ENCODE measurements at regions of chr10 and their contacts with region 1.

Region 1: DNA sequence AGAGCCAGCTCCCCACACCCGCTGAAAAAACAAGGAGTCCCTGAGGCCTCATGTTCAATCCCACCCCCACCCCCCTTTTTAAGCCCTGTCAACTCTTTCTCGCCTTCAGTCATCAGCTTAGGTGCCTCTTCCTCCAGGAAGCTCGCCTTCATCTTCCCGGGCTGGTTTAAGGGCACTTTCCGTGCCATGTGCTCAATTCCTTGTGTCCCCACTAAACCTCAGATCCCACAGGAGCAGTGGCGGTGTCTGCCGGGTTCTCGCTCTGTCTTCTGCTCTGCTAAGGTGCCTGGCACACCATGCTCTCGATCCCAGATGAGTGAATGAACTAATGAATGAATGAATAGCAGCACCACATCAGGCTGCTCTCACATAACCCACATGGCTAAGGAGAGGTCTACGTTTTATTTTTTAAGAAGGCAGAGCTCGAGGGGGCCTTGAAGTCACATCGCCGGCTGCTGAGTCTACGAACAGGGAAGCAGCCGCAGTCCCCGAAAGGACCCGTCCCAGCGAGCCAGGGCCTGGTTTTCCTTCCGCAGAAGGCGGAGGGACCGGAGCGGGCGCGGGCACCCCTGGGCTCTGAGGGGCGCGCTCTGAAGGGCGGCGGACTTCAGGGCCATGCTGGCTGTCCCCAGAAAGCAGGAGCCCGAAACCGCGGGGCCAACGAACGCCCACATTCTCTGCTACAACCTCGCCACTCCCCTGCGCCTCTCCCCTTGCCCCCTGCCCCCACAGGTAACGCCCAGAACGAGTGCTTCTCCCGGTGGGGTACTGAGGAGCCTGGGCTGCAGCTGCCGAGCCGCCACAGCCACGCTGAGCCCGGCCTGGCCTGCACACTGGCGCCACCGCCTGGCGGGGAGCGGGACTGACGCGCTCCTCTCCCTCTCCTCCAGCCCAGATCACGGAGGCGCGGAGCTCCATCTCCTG is 73.4 kb upstream of the KCNMA1 start:
- DNase-seq: peak; percentile 90
- ATAC-seq: peak; percentile 85
- H3K4me3 Mint-ChIP-seq: peak overlapping the region; percentile 64
- H3K27ac Mint-ChIP-seq: no peak overlapping the region
- H3K4me1 Mint-ChIP-seq: peaks cover 35% of the 10 kb centered on the region
- H3K27me3 Mint-ChIP-seq: peaks cover 29% of the 10 kb centered on the region
- CTCF ChIP-seq: peak; percentile 96

Region 2: GRCh38 chr10:77391605-77392235 is 319.3 kb before region 1 on chr10:
- CTCF ChIA-PET with region 1: interaction called, 14 read pairs
- POLR2A ChIA-PET with region 1: no interaction called
- DNase-seq: peak; percentile 96
- ATAC-seq: peak; percentile 89
- H3K4me3 Mint-ChIP-seq: no peak overlapping the region
- H3K27ac Mint-ChIP-seq: no peak overlapping the region
- H3K4me1 Mint-ChIP-seq: peaks cover 45% of the 10 kb centered on the region
- H3K27me3 Mint-ChIP-seq: no peaks in the 10 kb centered on the region
- CTCF ChIP-seq: no peak; the same call in none of the 2 replicates

Region 3: DNA sequence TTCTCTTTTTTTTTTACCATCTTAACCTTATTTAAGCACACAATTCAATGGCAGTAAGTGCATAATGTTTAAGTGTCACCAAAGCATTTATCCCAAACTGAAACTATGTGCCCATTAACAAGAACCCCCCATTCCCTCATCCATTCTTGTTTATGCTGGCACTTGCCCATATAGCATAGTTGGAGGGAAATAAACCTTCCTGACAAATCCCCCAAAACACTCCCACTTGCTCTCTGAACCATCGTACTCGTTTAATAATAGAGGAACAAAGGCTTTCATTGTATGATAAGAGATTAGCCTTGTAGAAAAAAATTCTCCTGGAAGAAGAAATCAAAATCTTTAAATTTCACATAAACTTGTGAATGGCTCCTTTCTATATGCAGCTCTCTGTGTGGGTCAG is 47.0 kb before region 1 on chr10:
- CTCF ChIA-PET with region 1: interaction called, 16 read pairs
- POLR2A ChIA-PET with region 1: interaction called, 8 read pairs
- DNase-seq: no peak
- ATAC-seq: no peak
- H3K4me3 Mint-ChIP-seq: no peak overlapping the region
- H3K27ac Mint-ChIP-seq: no peak overlapping the region
- H3K4me1 Mint-ChIP-seq: peaks cover 19% of the 10 kb centered on the region
- H3K27me3 Mint-ChIP-seq: no peaks in the 10 kb centered on the region; the same call in 1 of the 2 replicates
- CTCF ChIP-seq: no peak

Region 4: DNA sequence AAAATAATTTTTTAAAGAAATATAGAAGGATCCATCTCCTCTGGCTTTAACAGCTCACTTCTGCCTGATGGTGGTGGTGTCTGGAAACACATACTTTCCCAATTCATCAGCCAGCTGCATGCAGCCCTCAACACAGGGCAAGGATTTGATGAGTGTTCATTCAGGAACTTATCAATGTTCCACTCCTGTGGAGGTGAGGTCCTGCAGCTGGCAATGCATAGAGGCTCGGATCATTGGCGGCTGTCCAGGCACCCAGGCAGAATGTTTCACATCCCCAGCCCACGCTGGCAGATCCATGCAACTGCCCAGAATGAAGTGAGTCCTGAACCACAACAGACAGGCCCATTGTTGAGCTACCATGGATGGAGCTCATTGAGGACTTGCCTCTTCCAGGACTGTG is 18.2 kb before region 1 on chr10:
- CTCF ChIA-PET with region 1: interaction called, 62 read pairs
- POLR2A ChIA-PET with region 1: interaction called, 3 read pairs
- DNase-seq: no peak
- ATAC-seq: no peak
- H3K4me3 Mint-ChIP-seq: no peak overlapping the region
- H3K27ac Mint-ChIP-seq: no peak overlapping the region
- H3K4me1 Mint-ChIP-seq: no peaks in the 10 kb centered on the region
- H3K27me3 Mint-ChIP-seq: no peaks in the 10 kb centered on the region
- CTCF ChIP-seq: no peak

Region 5: DNA sequence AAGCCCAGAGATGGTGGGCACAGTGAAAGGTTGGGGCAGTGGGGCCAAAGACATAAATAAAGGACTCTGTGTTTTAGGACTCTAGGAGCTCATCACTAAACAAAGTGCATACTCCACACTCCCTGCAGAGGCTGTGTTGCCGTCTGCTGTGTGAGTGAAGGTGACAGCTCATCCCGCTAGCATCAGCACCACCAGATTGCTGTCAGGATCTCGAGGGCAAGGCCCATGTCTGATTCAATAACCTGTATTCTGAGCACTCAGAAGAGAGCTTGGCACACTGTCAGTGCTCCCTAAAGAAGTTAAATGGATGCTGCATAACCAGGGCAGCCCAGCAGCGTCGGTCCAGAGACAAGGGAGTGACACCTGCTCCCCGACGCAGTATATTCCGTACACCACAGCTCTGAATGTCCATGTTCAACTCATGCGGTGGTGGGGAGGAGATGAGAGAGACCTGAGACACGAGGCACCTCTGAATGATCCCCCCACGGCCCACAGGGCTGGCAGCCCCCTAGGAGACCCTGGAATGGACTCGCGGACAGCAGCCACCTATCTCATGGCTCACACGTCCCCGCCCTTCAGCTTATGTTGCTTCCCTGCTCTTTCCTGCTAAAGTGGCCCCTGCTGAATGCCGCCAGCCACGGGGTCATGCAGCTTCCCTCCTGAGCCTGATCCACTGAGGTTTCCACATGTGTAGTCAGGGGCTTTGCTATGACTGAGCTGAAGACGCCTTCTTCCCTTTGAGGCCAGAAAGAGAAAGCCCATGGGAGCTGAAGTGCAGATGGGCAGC is 59.3 kb after region 1 on chr10:
- CTCF ChIA-PET with region 1: interaction called, 13 read pairs
- POLR2A ChIA-PET with region 1: interaction called, 3 read pairs
- DNase-seq: no peak
- ATAC-seq: no peak
- H3K4me3 Mint-ChIP-seq: no peak overlapping the region
- H3K27ac Mint-ChIP-seq: no peak overlapping the region
- H3K4me1 Mint-ChIP-seq: no peaks in the 10 kb centered on the region
- H3K27me3 Mint-ChIP-seq: no peaks in the 10 kb centered on the region
- CTCF ChIP-seq: no peak

Measured in WTC11 (cell line).